Activated CD4-positive, alpha-beta T cell treated with anti-CD3 and anti-CD28 coated beads for 36 hours (primary cell): ENCODE measurements at regions of chr1 and their contacts with region 1.

Region 1: GRCh38 chr1:156172696-156173470 is 19.5 kb downstream of the SEMA4A start:
- DNase-seq: peak; percentile 35
- ATAC-seq: peak; percentile 54
- H3K4me3 Mint-ChIP-seq: no peak overlapping the region
- H3K27ac Mint-ChIP-seq: peak overlapping the region; percentile 76
- H3K4me1 Mint-ChIP-seq: peaks cover 28% of the 10 kb centered on the region
- H3K27me3 Mint-ChIP-seq: no peaks in the 10 kb centered on the region

Region 2: GRCh38 chr1:156160743-156161171 is 12.1 kb before region 1 on chr1:
- CTCF ChIA-PET with region 1: interaction called, 13 read pairs
- POLR2A ChIA-PET with region 1: interaction called, 6 read pairs
- intact Hi-C with region 1: no loop called
- DNase-seq: peak; percentile 86
- ATAC-seq: peak; percentile 60
- H3K4me3 Mint-ChIP-seq: peak overlapping the region; percentile 68
- H3K27ac Mint-ChIP-seq: peak overlapping the region; percentile 88
- H3K4me1 Mint-ChIP-seq: peaks cover 84% of the 10 kb centered on the region
- H3K27me3 Mint-ChIP-seq: no peaks in the 10 kb centered on the region